Ascending aorta (tissue), 2 donors: ENCODE measurements at regions of chr10 and their contacts with region 1.

Region 1: DNA sequence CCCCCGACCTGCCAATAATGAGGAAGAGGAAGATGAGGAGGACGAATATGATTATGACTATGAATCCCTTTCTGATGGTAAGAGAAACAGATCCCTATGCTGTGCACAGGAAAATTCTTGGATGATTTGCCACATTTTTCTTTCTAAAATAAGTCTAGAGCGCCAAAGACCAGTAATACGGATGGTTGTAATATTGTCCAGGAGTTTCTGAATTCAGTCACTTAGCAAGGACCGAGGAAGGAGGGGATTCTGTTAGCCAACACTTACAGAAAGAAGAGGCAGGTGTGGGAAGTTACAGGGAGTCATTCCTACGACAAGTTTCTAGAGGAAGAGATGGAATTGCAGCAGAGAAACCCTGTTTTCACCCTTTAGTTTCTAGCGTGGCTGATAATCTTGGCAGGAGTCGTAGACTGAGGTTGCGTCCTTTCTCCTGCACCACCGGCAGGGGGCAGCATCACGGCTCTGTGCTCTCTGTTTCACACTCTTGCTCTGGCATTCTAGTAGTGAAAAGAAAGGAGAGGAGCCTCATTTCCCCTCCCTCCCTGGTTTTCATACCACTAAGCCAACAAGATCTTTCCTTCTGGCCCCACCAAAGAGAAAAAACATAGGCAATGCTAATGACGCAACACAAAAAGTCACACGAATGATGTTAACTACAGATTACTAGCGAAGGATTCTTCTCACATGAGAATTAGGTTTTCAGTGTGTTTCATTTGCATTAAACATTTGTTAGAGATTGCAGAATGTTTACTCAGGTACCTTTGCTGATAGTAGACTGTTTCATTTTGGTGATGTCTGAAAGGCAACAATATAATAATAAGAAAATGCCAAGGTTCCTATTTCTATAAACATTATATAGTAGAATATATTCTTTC is 82.7 kb downstream of the NOC3L start:
- DNase-seq: no peak
- H3K4me3 ChIP-seq: no peak overlapping the region
- H3K27ac ChIP-seq: no peak overlapping the region
- H3K4me1 ChIP-seq: peaks cover 0 to 3% of the 10 kb centered on the region in 2 donors
- H3K27me3 ChIP-seq: no peaks in the 10 kb centered on the region
- CTCF ChIP-seq: peak; percentile 52 to 93 (median 79)

Region 2: DNA sequence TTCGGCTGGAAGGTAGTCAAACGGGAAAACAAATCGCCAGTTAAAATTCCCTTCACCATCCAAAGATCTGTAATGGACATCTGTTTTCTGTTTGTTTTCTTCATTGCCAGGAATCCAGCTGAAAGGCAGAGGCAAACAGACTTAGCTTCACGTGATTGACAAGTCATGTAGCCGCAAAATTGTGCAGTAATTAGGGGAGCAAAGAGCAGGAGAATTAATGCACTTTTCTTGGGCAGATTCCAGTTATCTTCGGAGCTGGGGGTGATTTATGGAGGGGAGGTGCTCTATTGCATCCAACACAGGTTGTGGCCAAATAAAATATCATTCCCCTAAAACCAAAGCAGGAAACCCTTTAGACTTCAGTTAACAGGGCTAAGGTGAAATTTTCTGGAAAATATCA is 960.2 kb before region 1 on chr10:
- intact Hi-C with region 1: loop called (anchors 10 kb)
- DNase-seq: no peak
- H3K4me3 ChIP-seq: no peak overlapping the region
- H3K27ac ChIP-seq: no peak overlapping the region
- H3K4me1 ChIP-seq: no peaks in the 10 kb centered on the region
- H3K27me3 ChIP-seq: no peaks in the 10 kb centered on the region
- CTCF ChIP-seq: no peak

Region 3: DNA sequence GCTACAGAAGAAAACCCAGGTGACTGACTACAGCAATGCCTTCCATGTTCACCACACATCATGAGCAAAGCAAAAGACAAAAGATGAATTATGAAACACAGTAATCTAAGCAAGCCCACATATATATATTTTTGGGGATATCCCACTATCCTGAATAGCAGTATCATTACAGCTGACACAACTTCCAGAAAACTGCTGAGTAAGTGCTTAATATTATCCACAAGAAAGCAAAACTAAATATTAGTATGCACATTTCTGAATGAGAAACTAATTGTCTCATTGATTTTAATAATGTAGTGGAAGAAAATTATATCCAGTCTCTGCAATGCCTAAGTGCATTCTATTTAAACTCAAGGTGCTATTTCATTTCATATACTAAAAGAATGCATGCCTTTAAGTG is 400.8 kb before region 1 on chr10:
- intact Hi-C with region 1: no loop called
- DNase-seq: no peak
- H3K4me3 ChIP-seq: no peak overlapping the region
- H3K27ac ChIP-seq: no peak overlapping the region
- H3K4me1 ChIP-seq: no peaks in the 10 kb centered on the region
- H3K27me3 ChIP-seq: no peaks in the 10 kb centered on the region
- CTCF ChIP-seq: no peak

Region 4: GRCh38 chr10:94076321-94076841 is 203.7 kb before region 1 on chr10:
- intact Hi-C with region 1: loop called (anchors 5 kb)
- DNase-seq: no peak
- H3K4me3 ChIP-seq: peak overlapping the region in 1 of 2 donors; percentile 26
- H3K27ac ChIP-seq: no peak overlapping the region
- H3K4me1 ChIP-seq: peaks cover 0 to 4% of the 10 kb centered on the region in 2 donors
- H3K27me3 ChIP-seq: no peaks in the 10 kb centered on the region
- CTCF ChIP-seq: peak; percentile 49 to 74 (median 49)

Region 5: GRCh38 chr10:94308866-94309265 is 28.8 kb after region 1 on chr10:
- intact Hi-C with region 1: no loop called
- DNase-seq: no peak
- H3K4me3 ChIP-seq: no peak overlapping the region
- H3K27ac ChIP-seq: no peak overlapping the region
- H3K4me1 ChIP-seq: no peaks in the 10 kb centered on the region
- H3K27me3 ChIP-seq: no peaks in the 10 kb centered on the region
- CTCF ChIP-seq: no peak

Region 6: GRCh38 chr10:94320285-94320914 is 40.3 kb after region 1 on chr10:
- intact Hi-C with region 1: loop called (anchors 1 kb)
- DNase-seq: peak in 1 of 2 donors; percentile 76
- H3K4me3 ChIP-seq: no peak overlapping the region
- H3K27ac ChIP-seq: no peak overlapping the region
- H3K4me1 ChIP-seq: peaks cover 0 to 7% of the 10 kb centered on the region in 2 donors
- H3K27me3 ChIP-seq: no peaks in the 10 kb centered on the region
- CTCF ChIP-seq: peak; percentile 58 to 90 (median 86)

Region 7: DNA sequence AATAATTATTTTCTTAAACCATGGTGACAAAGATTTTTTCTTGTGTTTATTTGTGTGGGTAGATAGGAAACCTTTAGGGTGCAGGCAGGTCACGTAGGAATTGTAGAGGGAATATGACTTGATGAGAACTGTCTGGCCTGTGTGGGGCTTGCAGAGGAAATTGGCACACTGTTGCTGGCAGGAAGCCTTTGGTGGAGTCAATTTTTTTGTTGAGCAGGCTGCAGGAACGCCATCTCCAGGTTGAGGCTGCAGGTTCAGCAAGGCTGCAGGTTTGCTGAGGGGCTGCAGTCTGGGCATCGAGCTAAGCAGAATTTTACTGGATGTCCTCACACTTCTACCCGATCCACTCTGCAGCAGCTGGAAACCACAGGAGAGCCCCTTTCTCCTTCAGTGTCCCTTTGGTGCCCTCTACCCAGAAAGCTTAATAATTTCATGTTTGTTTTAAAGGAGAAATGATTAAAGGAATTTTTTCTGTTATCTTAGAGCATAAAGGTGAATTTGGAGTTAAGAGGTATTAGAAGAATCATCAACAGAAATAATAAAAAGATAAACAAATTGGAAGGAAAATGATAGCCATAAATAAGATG is 159.3 kb after region 1 on chr10:
- intact Hi-C with region 1: loop called (anchors 5 kb)
- DNase-seq: no peak
- H3K4me3 ChIP-seq: no peak overlapping the region
- H3K27ac ChIP-seq: no peak overlapping the region
- H3K4me1 ChIP-seq: peaks cover 0 to 3% of the 10 kb centered on the region in 2 donors
- H3K27me3 ChIP-seq: no peaks in the 10 kb centered on the region
- CTCF ChIP-seq: peak in 1 of 3 experiments; percentile 17

Region 8: GRCh38 chr10:94623572-94623971 is 343.5 kb after region 1 on chr10:
- intact Hi-C with region 1: no loop called
- DNase-seq: no peak
- H3K4me3 ChIP-seq: no peak overlapping the region
- H3K27ac ChIP-seq: no peak overlapping the region
- H3K4me1 ChIP-seq: no peaks in the 10 kb centered on the region
- H3K27me3 ChIP-seq: no peaks in the 10 kb centered on the region
- CTCF ChIP-seq: no peak